Naive thymus-derived CD4-positive, alpha-beta T cell (primary cell): ENCODE measurements at regions of chr21 and their contacts with region 1.

Region 1: GRCh38 chr21:37435120-37435519 is 68.5 kb downstream of the DYRK1A start:
- DNase-seq: peak in 7 of 9 donors; percentile 58 to 85 (median 78)
- ATAC-seq: peak; percentile 99
- H3K4me3 ChIP-seq: no peak overlapping the region
- H3K4me3 Mint-ChIP-seq: no peak overlapping the region
- H3K27ac ChIP-seq: peak overlapping the region; percentile 4
- H3K27ac Mint-ChIP-seq: no peak overlapping the region
- H3K4me1 ChIP-seq: peaks cover 28 to 49% of the 10 kb centered on the region in 2 donors
- H3K4me1 Mint-ChIP-seq: peaks cover 39 to 61% (median 41%) of the 10 kb centered on the region in 7 donors
- H3K27me3 ChIP-seq: no peaks in the 10 kb centered on the region
- H3K27me3 Mint-ChIP-seq: no peaks in the 10 kb centered on the region

Region 2: GRCh38 chr21:37106998-37107397 is 328.1 kb before region 1 on chr21:
- CTCF ChIA-PET with region 1: no interaction called
- POLR2A ChIA-PET with region 1: no interaction called
- intact Hi-C with region 1: no loop called
- DNase-seq: no peak
- ATAC-seq: no peak
- H3K4me3 ChIP-seq: no peak overlapping the region
- H3K4me3 Mint-ChIP-seq: no peak overlapping the region
- H3K27ac ChIP-seq: no peak overlapping the region
- H3K27ac Mint-ChIP-seq: no peak overlapping the region
- H3K4me1 ChIP-seq: no peaks in the 10 kb centered on the region
- H3K4me1 Mint-ChIP-seq: peaks cover 0 to 14% (median 8%) of the 10 kb centered on the region in 7 donors
- H3K27me3 ChIP-seq: no peaks in the 10 kb centered on the region
- H3K27me3 Mint-ChIP-seq: no peaks in the 10 kb centered on the region

Region 3: GRCh38 chr21:37380349-37381323 is 54.5 kb before region 1 on chr21:
- CTCF ChIA-PET with region 1: no interaction called
- POLR2A ChIA-PET with region 1: no interaction called
- intact Hi-C with region 1: no loop called
- DNase-seq: no peak
- ATAC-seq: no peak
- H3K4me3 ChIP-seq: peak overlapping the region; percentile 8
- H3K4me3 Mint-ChIP-seq: peak overlapping the region in 9 of 10 donors; percentile 0 to 84 (median 65)
- H3K27ac ChIP-seq: no peak overlapping the region
- H3K27ac Mint-ChIP-seq: peak overlapping the region in 6 of 9 donors; percentile 3 to 77 (median 35)
- H3K4me1 ChIP-seq: peaks cover 72% of the 10 kb centered on the region in 2 donors
- H3K4me1 Mint-ChIP-seq: peaks cover 71 to 99% (median 92%) of the 10 kb centered on the region in 7 donors
- H3K27me3 ChIP-seq: no peaks in the 10 kb centered on the region
- H3K27me3 Mint-ChIP-seq: no peaks in the 10 kb centered on the region

Region 4: GRCh38 chr21:37419228-37419906 is 15.8 kb before region 1 on chr21:
- CTCF ChIA-PET with region 1: interaction called, 3 read pairs
- POLR2A ChIA-PET with region 1: interaction called, 3 read pairs
- intact Hi-C with region 1: loop called (anchors 1 to 2 kb)
- DNase-seq: no peak
- ATAC-seq: no peak
- H3K4me3 ChIP-seq: no peak overlapping the region
- H3K4me3 Mint-ChIP-seq: peak overlapping the region in 7 of 10 donors; percentile 40 to 76 (median 60)
- H3K27ac ChIP-seq: no peak overlapping the region
- H3K27ac Mint-ChIP-seq: peak overlapping the region; percentile 8 to 89 (median 73)
- H3K4me1 ChIP-seq: peaks cover 35 to 36% of the 10 kb centered on the region in 2 donors
- H3K4me1 Mint-ChIP-seq: peaks cover 46 to 95% (median 94%) of the 10 kb centered on the region in 7 donors
- H3K27me3 ChIP-seq: no peaks in the 10 kb centered on the region
- H3K27me3 Mint-ChIP-seq: no peaks in the 10 kb centered on the region

Region 5: GRCh38 chr21:37445228-37445627 is 10.1 kb after region 1 on chr21:
- CTCF ChIA-PET with region 1: no interaction called
- POLR2A ChIA-PET with region 1: interaction called, 6 read pairs
- intact Hi-C with region 1: loop called (anchors 1 kb)
- DNase-seq: no peak
- ATAC-seq: no peak
- H3K4me3 ChIP-seq: no peak overlapping the region
- H3K4me3 Mint-ChIP-seq: peak overlapping the region in 3 of 10 donors; percentile 4 to 28 (median 17)
- H3K27ac ChIP-seq: no peak overlapping the region
- H3K27ac Mint-ChIP-seq: peak overlapping the region in 6 of 9 donors; percentile 4 to 58 (median 18)
- H3K4me1 ChIP-seq: peaks cover 37 to 38% of the 10 kb centered on the region in 2 donors
- H3K4me1 Mint-ChIP-seq: peaks cover 61 to 100% (median 92%) of the 10 kb centered on the region in 7 donors
- H3K27me3 ChIP-seq: no peaks in the 10 kb centered on the region
- H3K27me3 Mint-ChIP-seq: no peaks in the 10 kb centered on the region

Region 6: GRCh38 chr21:37455504-37455911 is 20.4 kb after region 1 on chr21:
- CTCF ChIA-PET with region 1: no interaction called
- POLR2A ChIA-PET with region 1: no interaction called
- intact Hi-C with region 1: loop called (anchors 2 kb)
- DNase-seq: no peak
- ATAC-seq: no peak
- H3K4me3 ChIP-seq: no peak overlapping the region
- H3K4me3 Mint-ChIP-seq: peak overlapping the region in 9 of 10 donors; percentile 9 to 72 (median 53)
- H3K27ac ChIP-seq: peak overlapping the region; percentile 2
- H3K27ac Mint-ChIP-seq: peak overlapping the region in 8 of 9 donors; percentile 1 to 82 (median 56)
- H3K4me1 ChIP-seq: peaks cover 32 to 35% of the 10 kb centered on the region in 2 donors
- H3K4me1 Mint-ChIP-seq: peaks cover 65 to 97% (median 92%) of the 10 kb centered on the region in 7 donors
- H3K27me3 ChIP-seq: no peaks in the 10 kb centered on the region
- H3K27me3 Mint-ChIP-seq: no peaks in the 10 kb centered on the region

Region 7: DNA sequence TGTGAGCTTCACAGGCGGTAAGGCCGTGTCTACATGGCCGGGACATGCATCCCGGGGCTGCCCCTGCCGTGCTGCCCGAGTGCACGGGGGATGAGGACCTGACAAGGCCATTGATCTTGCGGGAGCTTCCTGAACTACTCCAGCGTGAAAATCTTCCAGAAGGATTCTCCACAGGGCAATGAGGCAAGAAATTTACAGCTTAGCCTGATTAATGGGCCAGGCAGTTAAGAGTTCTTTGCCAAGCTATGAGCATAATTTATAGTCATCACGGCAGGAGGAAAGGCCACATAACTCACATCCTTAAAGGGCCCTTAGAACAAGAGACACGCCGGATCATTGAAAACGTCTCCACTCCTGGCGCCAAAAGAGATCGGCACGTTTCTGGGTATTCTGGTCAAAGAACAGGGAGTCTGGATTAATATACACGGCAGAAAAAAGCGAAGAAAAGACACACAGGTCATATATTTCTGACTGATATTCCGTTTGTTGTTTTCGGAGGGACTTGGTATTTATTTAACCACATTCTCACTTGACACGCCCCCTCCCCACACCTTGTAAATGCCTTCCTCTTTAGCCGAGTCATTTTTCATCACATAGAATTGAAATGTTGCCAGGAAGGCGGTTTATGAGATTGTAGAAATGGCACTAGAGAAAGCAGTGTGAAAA is 112.0 kb after region 1 on chr21:
- CTCF ChIA-PET with region 1: no interaction called
- POLR2A ChIA-PET with region 1: no interaction called
- intact Hi-C with region 1: no loop called
- DNase-seq: peak in 3 of 9 donors; percentile 3 to 5 (median 3)
- ATAC-seq: no peak
- H3K4me3 ChIP-seq: no peak overlapping the region
- H3K4me3 Mint-ChIP-seq: peak overlapping the region in 8 of 10 donors; percentile 4 to 64 (median 44)
- H3K27ac ChIP-seq: no peak overlapping the region
- H3K27ac Mint-ChIP-seq: no peak overlapping the region
- H3K4me1 ChIP-seq: peaks cover 0 to 4% of the 10 kb centered on the region in 2 donors
- H3K4me1 Mint-ChIP-seq: peaks cover 14 to 30% (median 21%) of the 10 kb centered on the region in 7 donors
- H3K27me3 ChIP-seq: no peaks in the 10 kb centered on the region
- H3K27me3 Mint-ChIP-seq: peaks cover 17 to 55% (median 40%) of the 10 kb centered on the region in 5 donors